Caco-2 (cell line): ENCODE measurements at regions of chr7 and their contacts with region 1.

Region 1: GRCh38 chr7:137953665-137954470 is 48.0 kb downstream of the CREB3L2 start:
- DNase-seq: peak; percentile 79 to 91
- H3K4me3 ChIP-seq: no peak overlapping the region
- H3K4me3 Mint-ChIP-seq: peak overlapping the region; percentile 56
- H3K27ac Mint-ChIP-seq: peak overlapping the region; percentile 85
- H3K4me1 ChIP-seq: peaks cover 97% of the 10 kb centered on the region
- H3K4me1 Mint-ChIP-seq: peaks cover 72% of the 10 kb centered on the region
- H3K27me3 ChIP-seq: no peaks in the 10 kb centered on the region
- H3K27me3 Mint-ChIP-seq: no peaks in the 10 kb centered on the region
- CTCF ChIP-seq: no peak

Region 2: GRCh38 chr7:137916980-137917645 is 36.8 kb before region 1 on chr7:
- CTCF ChIA-PET with region 1: no interaction called
- POLR2A ChIA-PET with region 1: no interaction called
- intact Hi-C with region 1: loop called (anchors 5 kb)
- DNase-seq: no peak
- H3K4me3 ChIP-seq: no peak overlapping the region
- H3K4me3 Mint-ChIP-seq: no peak overlapping the region
- H3K27ac Mint-ChIP-seq: peak overlapping the region; percentile 53
- H3K4me1 ChIP-seq: no peaks in the 10 kb centered on the region
- H3K4me1 Mint-ChIP-seq: peaks cover 8% of the 10 kb centered on the region
- H3K27me3 ChIP-seq: no peaks in the 10 kb centered on the region
- H3K27me3 Mint-ChIP-seq: no peaks in the 10 kb centered on the region
- CTCF ChIP-seq: no peak

Region 3: GRCh38 chr7:137940656-137941518 is 13.0 kb before region 1 on chr7:
- CTCF ChIA-PET with region 1: no interaction called
- POLR2A ChIA-PET with region 1: no interaction called
- intact Hi-C with region 1: loop called (anchors 1 kb)
- DNase-seq: peak; percentile 47 to 77
- H3K4me3 ChIP-seq: no peak overlapping the region
- H3K4me3 Mint-ChIP-seq: no peak overlapping the region
- H3K27ac Mint-ChIP-seq: no peak overlapping the region
- H3K4me1 ChIP-seq: peaks cover 65% of the 10 kb centered on the region
- H3K4me1 Mint-ChIP-seq: peaks cover 43% of the 10 kb centered on the region
- H3K27me3 ChIP-seq: no peaks in the 10 kb centered on the region
- H3K27me3 Mint-ChIP-seq: no peaks in the 10 kb centered on the region
- CTCF ChIP-seq: no peak

Region 4: DNA sequence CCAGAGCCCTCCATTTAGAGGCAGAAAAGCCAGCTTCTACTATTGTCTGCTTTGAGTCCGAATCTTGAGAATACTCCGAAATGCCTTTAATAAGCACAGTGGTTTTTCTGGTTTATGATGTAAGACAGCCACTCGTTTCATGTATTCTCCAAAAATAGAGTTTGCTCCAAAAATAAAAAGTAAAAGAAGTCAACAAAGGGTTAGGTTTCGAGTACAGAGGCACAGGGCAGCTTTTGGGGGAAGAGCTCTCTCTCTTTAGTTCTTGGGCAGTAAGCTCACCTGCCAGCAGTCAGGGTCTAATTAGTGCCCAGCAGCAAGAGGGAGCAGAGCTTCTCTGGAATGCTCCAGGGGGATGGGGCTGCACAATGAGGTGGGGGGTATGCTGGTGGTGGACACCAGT is 27.8 kb after region 1 on chr7:
- CTCF ChIA-PET with region 1: no interaction called
- POLR2A ChIA-PET with region 1: interaction called, 3 read pairs
- intact Hi-C with region 1: loop called (anchors 1 kb)
- DNase-seq: no peak
- H3K4me3 ChIP-seq: no peak overlapping the region
- H3K4me3 Mint-ChIP-seq: no peak overlapping the region
- H3K27ac Mint-ChIP-seq: peak overlapping the region; percentile 29
- H3K4me1 ChIP-seq: peaks cover 82% of the 10 kb centered on the region
- H3K4me1 Mint-ChIP-seq: peaks cover 66% of the 10 kb centered on the region
- H3K27me3 ChIP-seq: no peaks in the 10 kb centered on the region
- H3K27me3 Mint-ChIP-seq: no peaks in the 10 kb centered on the region
- CTCF ChIP-seq: no peak

Region 5: GRCh38 chr7:138002096-138002827 is 48.4 kb after region 1 on chr7:
- CTCF ChIA-PET with region 1: interaction called, 7 read pairs
- POLR2A ChIA-PET with region 1: interaction called, 6 read pairs
- intact Hi-C with region 1: loop called (anchors 1 kb)
- DNase-seq: peak; percentile 99
- H3K4me3 ChIP-seq: peak overlapping the region; percentile 100
- H3K4me3 Mint-ChIP-seq: peak overlapping the region; percentile 93
- H3K27ac Mint-ChIP-seq: peak overlapping the region; percentile 91
- H3K4me1 ChIP-seq: peaks cover 27% of the 10 kb centered on the region
- H3K4me1 Mint-ChIP-seq: peaks cover 16% of the 10 kb centered on the region
- H3K27me3 ChIP-seq: no peaks in the 10 kb centered on the region
- H3K27me3 Mint-ChIP-seq: no peaks in the 10 kb centered on the region
- CTCF ChIP-seq: peak; percentile 81 to 86